MCF 10A (cell line): ENCODE measurements at regions of chr12 and their contacts with region 1.

Region 1: DNA sequence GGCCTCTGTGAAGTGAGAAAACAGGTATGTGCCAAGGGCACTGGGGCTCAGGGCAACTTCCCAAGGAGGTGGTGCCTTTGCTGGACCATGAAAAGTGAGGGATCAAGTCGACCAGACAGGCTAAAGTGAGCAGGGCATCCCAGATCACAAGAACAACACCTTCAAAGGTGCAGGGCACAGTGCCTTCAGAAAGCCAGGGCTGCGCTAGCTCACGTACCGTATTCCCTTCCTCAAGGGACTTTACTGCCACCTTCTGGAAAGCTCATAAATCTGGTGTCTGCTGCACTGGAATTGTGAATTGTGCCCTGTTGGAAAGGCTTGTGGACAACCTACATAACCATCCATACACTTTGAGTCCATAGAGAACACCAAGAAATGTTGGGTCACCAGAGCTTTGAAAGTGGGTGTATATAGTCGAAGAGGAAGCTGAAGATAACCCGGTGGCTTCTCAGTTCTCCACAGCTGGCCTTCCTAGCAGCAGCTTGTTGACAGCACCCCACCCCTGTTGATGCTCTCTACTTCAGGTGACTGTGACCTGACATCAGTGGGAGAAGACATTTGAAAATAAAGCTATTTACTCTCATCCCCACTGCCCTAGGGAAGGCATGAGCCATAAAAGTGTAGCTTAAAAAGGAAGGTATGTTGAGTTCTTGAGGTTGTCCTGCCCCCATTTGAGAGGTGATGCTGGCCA is 24.5 kb downstream of the FIGNL2 start:
- DNase-seq: peak; percentile 81
- H3K4me3 Mint-ChIP-seq: no peak overlapping the region
- H3K27ac Mint-ChIP-seq: no peak overlapping the region
- H3K4me1 Mint-ChIP-seq: peaks cover 12% of the 10 kb centered on the region
- H3K27me3 Mint-ChIP-seq: peaks cover 12% of the 10 kb centered on the region
- CTCF ChIP-seq: peak; percentile 72

Region 2: DNA sequence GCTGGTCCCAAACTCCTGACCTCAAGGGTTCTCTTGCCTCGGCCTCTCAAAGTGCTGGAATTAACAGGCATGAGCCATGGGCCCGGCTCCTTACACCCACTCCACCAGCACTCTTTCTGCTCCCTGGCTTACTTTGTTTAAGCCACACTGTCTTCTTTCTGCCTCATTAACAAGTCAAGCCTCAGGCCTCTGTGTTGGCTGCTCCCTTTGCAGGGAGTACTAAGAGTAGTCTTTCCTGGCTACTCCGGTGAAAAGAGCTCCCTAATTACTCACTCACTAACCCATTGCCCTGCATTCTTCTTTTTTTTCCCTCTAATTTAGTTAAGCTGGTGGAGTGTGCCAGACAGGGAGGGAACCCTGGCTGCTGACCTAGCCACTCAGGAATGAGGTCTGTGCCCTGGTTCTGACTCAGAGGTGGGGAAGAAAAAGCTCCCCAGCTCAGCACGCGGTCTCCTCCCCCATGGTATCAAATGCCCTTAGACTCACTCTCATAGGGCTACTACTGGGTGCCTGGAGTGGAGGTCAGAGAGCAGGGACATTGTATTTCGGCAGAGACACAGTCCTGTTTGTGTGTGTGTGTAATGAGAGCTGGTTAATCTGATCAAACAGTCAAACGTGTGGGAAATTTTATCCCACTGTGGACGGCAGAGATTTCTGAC is 452.6 kb before region 1 on chr12:
- CTCF ChIA-PET with region 1: interaction called, 14 read pairs
- POLR2A ChIA-PET with region 1: interaction called, 4 read pairs
- intact Hi-C with region 1: no loop called
- DNase-seq: peak; percentile 96
- H3K4me3 Mint-ChIP-seq: peak overlapping the region; percentile 10
- H3K27ac Mint-ChIP-seq: peak overlapping the region; percentile 80
- H3K4me1 Mint-ChIP-seq: peaks cover 21% of the 10 kb centered on the region
- H3K27me3 Mint-ChIP-seq: no peaks in the 10 kb centered on the region
- CTCF ChIP-seq: no peak

Region 3: GRCh38 chr12:51424662-51425438 is 399.2 kb before region 1 on chr12 and contains the start of gene SLC4A8:
- CTCF ChIA-PET with region 1: interaction called, 77 read pairs
- POLR2A ChIA-PET with region 1: interaction called, 5 read pairs
- intact Hi-C with region 1: loop called (anchors 1 kb)
- DNase-seq: peak; percentile 58
- H3K4me3 Mint-ChIP-seq: peak within 1 kb of the TSS; percentile 68
- H3K27ac Mint-ChIP-seq: no peak within 1 kb of the TSS
- H3K4me1 Mint-ChIP-seq: no peaks in the 10 kb centered on the region
- H3K27me3 Mint-ChIP-seq: peaks cover 14% of the 10 kb centered on the region
- CTCF ChIP-seq: peak; percentile 88
- total RNA-seq, gene SLC4A8: 0.56 and 1.1 TPM in 2 replicates

Region 4: GRCh38 chr12:51531978-51532497 is 292.0 kb before region 1 on chr12:
- CTCF ChIA-PET with region 1: interaction called, 33 read pairs
- POLR2A ChIA-PET with region 1: no interaction called
- intact Hi-C with region 1: loop called (anchors 1 kb)
- DNase-seq: peak; percentile 83
- H3K4me3 Mint-ChIP-seq: no peak overlapping the region
- H3K27ac Mint-ChIP-seq: no peak overlapping the region
- H3K4me1 Mint-ChIP-seq: peaks cover 11% of the 10 kb centered on the region
- H3K27me3 Mint-ChIP-seq: peaks cover 11% of the 10 kb centered on the region
- CTCF ChIP-seq: peak; percentile 85

Region 5: GRCh38 chr12:51678086-51678724 is 145.8 kb before region 1 on chr12:
- CTCF ChIA-PET with region 1: interaction called, 9 read pairs
- POLR2A ChIA-PET with region 1: interaction called, 12 read pairs
- intact Hi-C with region 1: loop called (anchors 5 kb)
- DNase-seq: peak; percentile 63
- H3K4me3 Mint-ChIP-seq: no peak overlapping the region
- H3K27ac Mint-ChIP-seq: no peak overlapping the region
- H3K4me1 Mint-ChIP-seq: peaks cover under 1% of the 10 kb centered on the region
- H3K27me3 Mint-ChIP-seq: peaks cover 42% of the 10 kb centered on the region
- CTCF ChIP-seq: peak; percentile 76

Region 6: GRCh38 chr12:51850081-51850962 is 26.3 kb after region 1 on chr12:
- CTCF ChIA-PET with region 1: no interaction called
- POLR2A ChIA-PET with region 1: no interaction called
- intact Hi-C with region 1: no loop called
- DNase-seq: no peak
- H3K4me3 Mint-ChIP-seq: no peak overlapping the region
- H3K27ac Mint-ChIP-seq: no peak overlapping the region
- H3K4me1 Mint-ChIP-seq: no peaks in the 10 kb centered on the region
- H3K27me3 Mint-ChIP-seq: peaks cover 53% of the 10 kb centered on the region
- CTCF ChIP-seq: no peak

Region 7: GRCh38 chr12:51871126-51871525 is 47.1 kb after region 1 on chr12:
- CTCF ChIA-PET with region 1: interaction called, 10 read pairs
- POLR2A ChIA-PET with region 1: no interaction called
- intact Hi-C with region 1: loop called (anchors 5 kb)
- DNase-seq: no peak
- H3K4me3 Mint-ChIP-seq: no peak overlapping the region
- H3K27ac Mint-ChIP-seq: no peak overlapping the region
- H3K4me1 Mint-ChIP-seq: no peaks in the 10 kb centered on the region
- H3K27me3 Mint-ChIP-seq: no peaks in the 10 kb centered on the region
- CTCF ChIP-seq: no peak

Region 8: DNA sequence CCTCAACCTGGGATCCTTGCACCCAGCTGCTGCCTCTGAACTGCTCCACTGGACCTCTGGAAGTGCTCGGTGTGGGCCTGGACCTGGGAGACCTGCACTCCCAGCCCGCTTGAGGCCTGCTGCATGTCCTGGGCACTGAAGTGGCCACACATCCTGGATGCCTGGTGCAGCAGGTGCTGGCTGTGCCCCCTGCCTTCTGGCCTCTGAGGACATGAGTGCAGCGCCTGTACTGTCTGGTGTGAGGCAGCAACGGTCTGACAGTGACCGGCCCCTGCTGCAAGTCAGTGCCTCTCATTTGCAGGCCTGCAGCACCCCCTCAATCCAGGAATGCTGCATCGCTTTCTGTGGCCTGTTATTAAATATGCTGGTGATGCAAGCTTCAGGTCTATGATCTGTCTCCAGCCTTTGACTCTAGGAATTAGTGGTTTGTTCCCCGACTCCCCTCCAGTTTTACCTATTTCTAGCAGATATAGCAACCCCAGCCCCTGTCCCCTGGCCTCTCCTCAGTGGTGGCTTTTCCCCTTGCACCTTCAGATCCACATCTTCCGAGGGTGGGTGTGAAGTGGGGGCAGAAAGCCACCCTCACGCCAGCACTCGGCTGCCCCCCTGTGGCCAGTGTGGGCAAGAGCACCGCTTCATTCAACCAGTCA is 259.1 kb after region 1 on chr12:
- CTCF ChIA-PET with region 1: no interaction called
- POLR2A ChIA-PET with region 1: no interaction called
- intact Hi-C with region 1: no loop called
- DNase-seq: peak; percentile 54
- H3K4me3 Mint-ChIP-seq: no peak overlapping the region
- H3K27ac Mint-ChIP-seq: no peak overlapping the region
- H3K4me1 Mint-ChIP-seq: peaks cover 14% of the 10 kb centered on the region
- H3K27me3 Mint-ChIP-seq: peaks cover 28% of the 10 kb centered on the region
- CTCF ChIP-seq: peak; percentile 95